CD8-positive, alpha-beta memory T cell (primary cell): ENCODE measurements at regions of chr19 and their contacts with region 1.

Region 1: GRCh38 chr19:55391702-55392615 is 6.2 kb downstream of the RPL28 start:
- DNase-seq: no peak
- H3K4me3 ChIP-seq: no peak overlapping the region
- H3K4me3 Mint-ChIP-seq: peak overlapping the region in 1 of 7 donors; percentile 40
- H3K27ac ChIP-seq: no peak overlapping the region
- H3K27ac Mint-ChIP-seq: peak overlapping the region in 1 of 8 donors; percentile 99
- H3K4me1 ChIP-seq: peaks cover 33% of the 10 kb centered on the region
- H3K4me1 Mint-ChIP-seq: peaks cover 35 to 50% (median 41%) of the 10 kb centered on the region in 3 donors
- H3K27me3 ChIP-seq: no peaks in the 10 kb centered on the region
- H3K27me3 Mint-ChIP-seq: peaks cover 0 to 3% of the 10 kb centered on the region in 2 donors

Region 2: GRCh38 chr19:55353803-55354697 is 37.9 kb before region 1 on chr19:
- CTCF ChIA-PET with region 1: no interaction called
- POLR2A ChIA-PET with region 1: no interaction called
- DNase-seq: peak; percentile 52 to 73 (median 73)
- H3K4me3 ChIP-seq: peak overlapping the region; percentile 47
- H3K4me3 Mint-ChIP-seq: peak overlapping the region; percentile 65 to 90 (median 83)
- H3K27ac ChIP-seq: no peak overlapping the region
- H3K27ac Mint-ChIP-seq: peak overlapping the region in 4 of 8 donors; percentile 81 to 89 (median 84)
- H3K4me1 ChIP-seq: peaks cover 13% of the 10 kb centered on the region
- H3K4me1 Mint-ChIP-seq: peaks cover 17 to 38% (median 24%) of the 10 kb centered on the region in 3 donors
- H3K27me3 ChIP-seq: peaks cover 22% of the 10 kb centered on the region
- H3K27me3 Mint-ChIP-seq: peaks cover 24 to 47% of the 10 kb centered on the region in 2 donors

Region 3: DNA sequence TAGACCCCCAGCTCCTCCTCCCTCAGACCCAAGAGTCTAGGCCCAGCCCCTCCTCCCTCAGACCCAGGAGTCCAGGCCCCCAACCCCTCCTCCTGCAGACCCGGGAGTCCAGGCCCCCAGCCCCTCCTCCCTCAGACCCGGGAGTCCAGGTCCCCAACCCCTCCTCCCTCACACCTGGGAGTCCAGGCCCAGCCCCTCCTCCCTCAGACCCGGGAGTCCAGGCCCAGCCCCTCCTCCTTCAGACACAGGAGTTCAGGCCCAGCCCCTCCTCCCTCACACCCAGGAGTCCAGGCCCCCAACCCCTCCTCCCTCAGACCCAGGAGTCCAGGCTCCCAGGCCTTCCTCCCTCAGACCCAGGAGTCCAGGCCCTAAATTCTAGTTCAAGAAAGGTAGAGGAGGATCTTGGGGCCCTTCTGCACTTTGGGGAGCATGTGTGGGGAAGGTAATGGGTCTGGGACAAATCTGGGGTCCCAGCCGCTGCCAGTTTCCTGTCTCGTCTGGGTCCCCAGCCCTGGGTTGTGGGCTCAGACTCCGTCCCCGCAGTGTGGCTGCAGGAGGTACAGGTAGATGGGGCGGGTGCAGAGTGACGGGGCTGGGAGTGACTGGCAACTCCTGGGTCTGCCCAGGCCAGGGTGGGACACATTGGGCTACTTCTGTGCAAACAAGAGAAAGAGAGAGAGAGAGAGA is 18.5 kb before region 1 on chr19:
- CTCF ChIA-PET with region 1: no interaction called
- POLR2A ChIA-PET with region 1: interaction called, 11 read pairs
- DNase-seq: no peak
- H3K4me3 ChIP-seq: no peak overlapping the region
- H3K4me3 Mint-ChIP-seq: peak overlapping the region in 1 of 7 donors; percentile 36
- H3K27ac ChIP-seq: no peak overlapping the region
- H3K27ac Mint-ChIP-seq: peak overlapping the region in 1 of 8 donors; percentile 49
- H3K4me1 ChIP-seq: peaks cover 6% of the 10 kb centered on the region
- H3K4me1 Mint-ChIP-seq: peaks cover 7 to 13% (median 8%) of the 10 kb centered on the region in 3 donors
- H3K27me3 ChIP-seq: peaks cover 34% of the 10 kb centered on the region
- H3K27me3 Mint-ChIP-seq: peaks cover 29 to 38% of the 10 kb centered on the region in 2 donors

Region 4: GRCh38 chr19:55407800-55408532 is 16.0 kb after region 1 on chr19:
- CTCF ChIA-PET with region 1: interaction called, 3 read pairs
- POLR2A ChIA-PET with region 1: interaction called, 14 read pairs
- DNase-seq: peak; percentile 96 to 98 (median 98)
- H3K4me3 ChIP-seq: peak overlapping the region; percentile 79
- H3K4me3 Mint-ChIP-seq: peak overlapping the region; percentile 89 to 96 (median 94)
- H3K27ac ChIP-seq: peak overlapping the region; percentile 99
- H3K27ac Mint-ChIP-seq: peak overlapping the region; percentile 98 to 100 (median 99)
- H3K4me1 ChIP-seq: peaks cover 22% of the 10 kb centered on the region
- H3K4me1 Mint-ChIP-seq: peaks cover 29 to 41% (median 38%) of the 10 kb centered on the region in 3 donors
- H3K27me3 ChIP-seq: no peaks in the 10 kb centered on the region
- H3K27me3 Mint-ChIP-seq: peaks cover 0 to 2% of the 10 kb centered on the region in 2 donors